MCF 10A (cell line): ENCODE measurements at regions of chr15 and their contacts with region 1.

Region 1: GRCh38 chr15:90994417-90995311 is at the start of gene PRC1:
- DNase-seq: peak; percentile 99
- H3K4me3 Mint-ChIP-seq: peak within 1 kb of the TSS; percentile 88
- H3K27ac Mint-ChIP-seq: peak within 1 kb of the TSS; percentile 98
- H3K4me1 Mint-ChIP-seq: peaks cover 9% of the 10 kb centered on the region
- H3K27me3 Mint-ChIP-seq: no peaks in the 10 kb centered on the region
- CTCF ChIP-seq: no peak
- total RNA-seq, gene PRC1: 83.1 and 125 TPM in 2 replicates

Region 2: GRCh38 chr15:90982135-90982534 is 12.5 kb before region 1 on chr15:
- CTCF ChIA-PET with region 1: no interaction called
- POLR2A ChIA-PET with region 1: interaction called, 37 read pairs
- intact Hi-C with region 1: no loop called
- DNase-seq: peak; percentile 44
- H3K4me3 Mint-ChIP-seq: no peak overlapping the region
- H3K27ac Mint-ChIP-seq: peak overlapping the region; percentile 53
- H3K4me1 Mint-ChIP-seq: peaks cover 5% of the 10 kb centered on the region
- H3K27me3 Mint-ChIP-seq: no peaks in the 10 kb centered on the region
- CTCF ChIP-seq: no peak